ENCODE measurements at regions of chr18 and their contacts with region 1.

Region 1: GRCh38 chr18:58776084-58776483 is 88.6 kb upstream of the ZNF532 start:
- DNase-seq: no peak
- H3K4me3 ChIP-seq: no peak overlapping the region
- H3K27ac ChIP-seq: no peak overlapping the region
- H3K4me1 ChIP-seq: peaks cover 0 to under 1% (median 0%) of the 10 kb centered on the region in 4 donors
- H3K27me3 ChIP-seq: no peaks in the 10 kb centered on the region
- CTCF ChIP-seq: no peak
- EP300 ChIP-seq: no peak
- POLR2A ChIP-seq: no peak

Region 2: GRCh38 chr18:58730618-58731017 is 45.5 kb before region 1 on chr18:
- in situ Hi-C with region 1: no loop called
- intact Hi-C with region 1: no loop called
- DNase-seq: no peak
- H3K4me3 ChIP-seq: no peak overlapping the region
- H3K27ac ChIP-seq: no peak overlapping the region
- H3K4me1 ChIP-seq: no peaks in the 10 kb centered on the region
- H3K27me3 ChIP-seq: no peaks in the 10 kb centered on the region
- CTCF ChIP-seq: no peak
- EP300 ChIP-seq: no peak
- POLR2A ChIP-seq: no peak

Region 3: DNA sequence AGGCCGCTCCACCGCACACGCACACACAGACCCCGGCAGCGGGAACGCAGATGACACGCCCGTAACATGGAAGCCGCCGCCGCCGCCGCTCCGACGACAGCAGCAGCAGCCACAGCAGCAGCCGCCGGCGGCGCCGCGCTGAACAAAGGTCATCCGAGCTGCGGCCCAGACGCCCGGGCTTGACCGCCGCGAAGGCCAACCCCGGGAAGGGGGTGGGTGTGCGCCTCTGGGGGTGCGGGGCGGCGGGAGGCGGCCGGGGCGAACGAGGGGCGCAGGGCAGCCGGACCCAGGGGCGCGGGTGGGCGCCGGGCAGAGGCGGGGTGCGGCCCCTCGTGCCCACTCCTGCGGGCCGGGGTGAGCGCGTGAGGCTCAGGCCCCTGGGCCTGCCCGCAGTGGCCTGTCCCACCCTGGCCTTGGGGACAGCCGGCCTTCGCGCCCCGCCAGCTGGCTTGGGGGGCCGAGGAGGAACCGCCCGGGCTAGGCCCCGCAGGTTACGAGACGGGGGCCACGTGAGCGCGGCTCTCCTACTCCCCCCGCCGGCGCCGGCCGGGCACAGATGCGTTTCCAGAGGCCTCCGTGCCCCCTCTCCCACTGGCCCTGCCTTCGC is 87.6 kb after region 1 on chr18:
- in situ Hi-C with region 1: no loop called
- intact Hi-C with region 1: loop called (anchors 5 kb)
- DNase-seq: peak; percentile 61
- H3K4me3 ChIP-seq: peak overlapping the region; percentile 10 to 51 (median 38)
- H3K27ac ChIP-seq: peak overlapping the region; percentile 88 to 92 (median 90)
- H3K4me1 ChIP-seq: peaks cover 5 to 80% (median 33%) of the 10 kb centered on the region in 4 donors
- H3K27me3 ChIP-seq: no peaks in the 10 kb centered on the region
- CTCF ChIP-seq: no peak
- EP300 ChIP-seq: no peak
- POLR2A ChIP-seq: no peak